ENCODE measurements at regions of chr19 and their contacts with region 1.

Region 1: GRCh38 chr19:6279931-6280591 is at the start of gene MLLT1:
- DNase-seq: peak; percentile 97
- H3K4me3 ChIP-seq: peak within 1 kb of the TSS; percentile 81 to 90 (median 85)
- H3K27ac ChIP-seq: peak within 1 kb of the TSS; percentile 66
- H3K4me1 ChIP-seq: peaks cover 5% of the 10 kb centered on the region
- H3K27me3 ChIP-seq: no peaks in the 10 kb centered on the region
- CTCF ChIP-seq: peak; percentile 29 to 56
- total RNA-seq, gene MLLT1: 5.8 to 45.4 TPM

Region 2: GRCh38 chr19:5977785-5978605 is 302.1 kb before region 1 on chr19 and contains the start of gene RANBP3:
- CTCF ChIA-PET with region 1: interaction called, 10 read pairs
- dilution Hi-C with region 1: no loop called
- in situ Hi-C with region 1: no loop called
- intact Hi-C with region 1: no loop called
- DNase-seq: peak; percentile 99
- H3K4me3 ChIP-seq: peak within 1 kb of the TSS; percentile 67 to 96 (median 81)
- H3K27ac ChIP-seq: peak within 1 kb of the TSS; percentile 58
- H3K4me1 ChIP-seq: peaks cover 21% of the 10 kb centered on the region
- H3K27me3 ChIP-seq: no peaks in the 10 kb centered on the region
- CTCF ChIP-seq: no peak
- total RNA-seq, gene RANBP3: 41.0 to 73.9 TPM